ENCODE measurements at regions of chr3 and their contacts with region 1.

Region 1: GRCh38 chr3:141105828-141106628 is 54.9 kb downstream of the SPSB4 start:
- DNase-seq: peak; percentile 61
- H3K4me3 ChIP-seq: no peak overlapping the region
- H3K27ac ChIP-seq: no peak overlapping the region
- H3K4me1 ChIP-seq: no peaks in the 10 kb centered on the region
- H3K27me3 ChIP-seq: peaks cover 3% of the 10 kb centered on the region
- CTCF ChIP-seq: peak; percentile 77 to 79

Region 2: DNA sequence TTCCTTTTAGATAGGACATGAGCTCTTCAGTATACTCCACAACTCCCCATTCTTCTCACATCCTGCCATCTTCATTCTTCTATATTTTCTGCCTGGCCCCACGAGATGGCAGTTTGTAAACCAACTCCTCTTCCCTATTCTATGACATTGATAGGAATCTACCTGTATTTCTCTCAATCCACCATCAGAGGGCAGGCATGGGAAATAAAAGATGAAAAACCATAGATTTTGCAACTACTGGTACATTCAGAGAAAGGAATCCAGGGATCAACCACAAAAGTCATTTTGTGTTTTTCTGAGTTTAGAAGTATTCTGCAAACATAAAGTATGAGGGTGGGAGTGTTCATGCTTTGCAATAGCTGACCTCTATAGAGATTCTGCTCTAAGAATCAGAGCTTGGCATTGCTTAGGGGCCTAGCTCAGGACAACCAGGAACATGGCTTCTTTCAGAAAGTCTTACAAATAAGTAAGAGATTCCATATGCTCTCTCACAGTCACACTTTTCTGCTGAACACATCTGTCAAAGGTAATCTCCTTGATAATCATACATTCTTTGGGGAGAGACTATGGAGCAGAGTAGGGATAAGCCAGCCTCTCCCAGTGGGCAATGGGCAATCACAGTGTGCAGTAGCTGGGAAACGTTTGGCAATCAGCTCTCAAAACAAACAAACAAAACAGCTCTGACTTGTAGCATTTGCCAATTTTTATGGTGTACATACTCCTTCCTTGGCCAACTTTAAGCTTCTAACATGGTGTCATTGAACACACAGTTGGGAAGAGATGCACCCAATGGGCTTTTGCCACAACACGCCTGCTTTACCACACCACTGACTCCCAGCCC is 207.5 kb before region 1 on chr3:
- CTCF ChIA-PET with region 1: no interaction called
- dilution Hi-C with region 1: no loop called
- in situ Hi-C with region 1: loop called in 1 of 2 experiments (anchors 10 kb)
- intact Hi-C with region 1: loop called (anchors 1 kb)
- DNase-seq: peak; percentile 75
- H3K4me3 ChIP-seq: no peak overlapping the region
- H3K27ac ChIP-seq: no peak overlapping the region
- H3K4me1 ChIP-seq: peaks cover 3% of the 10 kb centered on the region
- H3K27me3 ChIP-seq: peaks cover 2% of the 10 kb centered on the region
- CTCF ChIP-seq: peak; percentile 64 to 68

Region 3: GRCh38 chr3:140922634-140923033 is 183.4 kb before region 1 on chr3:
- CTCF ChIA-PET with region 1: no interaction called
- dilution Hi-C with region 1: no loop called
- in situ Hi-C with region 1: no loop called
- intact Hi-C with region 1: loop called (anchors 1 kb)
- DNase-seq: no peak
- H3K4me3 ChIP-seq: no peak overlapping the region
- H3K27ac ChIP-seq: no peak overlapping the region
- H3K4me1 ChIP-seq: no peaks in the 10 kb centered on the region
- H3K27me3 ChIP-seq: peaks cover 2% of the 10 kb centered on the region
- CTCF ChIP-seq: peak; percentile 26 to 56

Region 4: GRCh38 chr3:141000027-141000663 is 105.9 kb before region 1 on chr3:
- CTCF ChIA-PET with region 1: no interaction called
- dilution Hi-C with region 1: no loop called
- in situ Hi-C with region 1: loop called (anchors 5 kb)
- intact Hi-C with region 1: loop called (anchors 1 kb)
- DNase-seq: peak; percentile 51
- H3K4me3 ChIP-seq: no peak overlapping the region
- H3K27ac ChIP-seq: no peak overlapping the region
- H3K4me1 ChIP-seq: no peaks in the 10 kb centered on the region
- H3K27me3 ChIP-seq: no peaks in the 10 kb centered on the region
- CTCF ChIP-seq: peak; percentile 66 to 88

Region 5: DNA sequence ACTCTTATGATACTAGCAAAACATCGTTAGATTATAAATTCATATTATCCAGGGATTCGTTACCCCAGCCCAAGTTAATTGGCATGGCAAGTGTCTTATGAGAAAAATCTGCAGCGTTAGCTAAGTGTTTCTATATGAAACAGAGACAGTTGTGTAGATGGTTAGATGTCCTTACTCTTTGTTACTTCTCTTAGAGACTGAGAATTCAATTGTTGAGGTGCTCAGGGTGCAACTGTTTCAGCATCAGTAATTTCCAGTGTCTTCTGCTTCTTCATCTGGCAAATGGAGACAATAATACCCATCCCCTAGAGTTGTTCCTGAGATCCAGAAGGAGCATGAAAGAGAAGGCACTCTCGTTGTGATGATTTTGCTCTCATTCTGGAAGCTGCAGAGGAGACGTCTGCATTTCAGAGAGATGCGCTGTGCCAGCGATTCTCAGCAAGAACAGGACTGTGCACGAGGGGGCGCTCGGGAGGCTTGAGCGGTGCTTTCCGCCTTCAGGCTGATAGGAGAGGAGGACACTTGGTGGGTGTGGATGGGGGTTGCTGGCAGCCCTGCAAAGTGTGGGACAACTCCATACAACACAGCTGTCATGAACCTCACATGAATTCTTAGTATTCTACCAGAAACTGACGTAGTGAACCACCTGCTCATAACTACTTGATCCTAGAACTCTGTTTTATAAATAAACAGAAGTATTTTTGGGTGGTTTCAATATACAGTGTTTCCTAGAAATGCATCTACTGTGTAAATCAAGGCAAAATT is 94.6 kb before region 1 on chr3:
- CTCF ChIA-PET with region 1: no interaction called
- dilution Hi-C with region 1: no loop called
- in situ Hi-C with region 1: no loop called
- intact Hi-C with region 1: loop called (anchors 1 kb)
- DNase-seq: peak; percentile 31
- H3K4me3 ChIP-seq: no peak overlapping the region
- H3K27ac ChIP-seq: no peak overlapping the region
- H3K4me1 ChIP-seq: no peaks in the 10 kb centered on the region
- H3K27me3 ChIP-seq: peaks cover 2% of the 10 kb centered on the region
- CTCF ChIP-seq: peak; percentile 85 to 92

Region 6: DNA sequence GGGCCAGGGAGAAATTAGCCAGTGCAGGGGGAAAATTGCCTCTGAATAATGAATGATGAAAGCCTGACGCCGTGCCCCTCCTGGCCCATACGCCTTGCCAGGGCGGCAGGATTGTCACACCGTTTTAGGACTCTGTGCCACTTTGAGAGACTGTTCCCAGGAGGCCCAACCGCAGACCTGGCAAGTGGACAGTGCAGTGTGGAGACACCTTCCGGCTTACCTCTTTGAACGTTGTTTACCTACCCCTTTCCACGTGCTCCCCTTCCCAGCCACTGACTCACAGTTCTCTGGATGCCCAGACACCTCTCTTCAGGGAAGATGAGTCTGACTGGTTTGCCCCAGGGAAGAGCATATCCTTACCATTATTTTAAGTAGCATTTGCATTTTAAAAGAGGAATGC is 41.6 kb after region 1 on chr3:
- CTCF ChIA-PET with region 1: no interaction called
- dilution Hi-C with region 1: loop called (anchors 5 kb)
- in situ Hi-C with region 1: no loop called
- intact Hi-C with region 1: no loop called
- DNase-seq: no peak
- H3K4me3 ChIP-seq: no peak overlapping the region
- H3K27ac ChIP-seq: no peak overlapping the region
- H3K4me1 ChIP-seq: no peaks in the 10 kb centered on the region
- H3K27me3 ChIP-seq: peaks cover 3% of the 10 kb centered on the region
- CTCF ChIP-seq: no peak

Region 7: GRCh38 chr3:141192345-141192744 is 86.3 kb after region 1 on chr3:
- CTCF ChIA-PET with region 1: no interaction called
- dilution Hi-C with region 1: no loop called
- in situ Hi-C with region 1: loop called in 1 of 2 experiments (anchors 5 kb)
- intact Hi-C with region 1: loop called (anchors 1 kb)
- DNase-seq: peak; percentile 87
- H3K4me3 ChIP-seq: no peak overlapping the region
- H3K27ac ChIP-seq: no peak overlapping the region
- H3K4me1 ChIP-seq: peaks cover 6% of the 10 kb centered on the region
- H3K27me3 ChIP-seq: peaks cover 7% of the 10 kb centered on the region
- CTCF ChIP-seq: peak; percentile 98 to 99

Region 8: GRCh38 chr3:141710573-141711251 is 604.7 kb after region 1 on chr3:
- CTCF ChIA-PET with region 1: no interaction called
- dilution Hi-C with region 1: no loop called
- in situ Hi-C with region 1: no loop called
- intact Hi-C with region 1: no loop called
- DNase-seq: peak; percentile 57
- H3K4me3 ChIP-seq: no peak overlapping the region
- H3K27ac ChIP-seq: no peak overlapping the region
- H3K4me1 ChIP-seq: peaks cover 9% of the 10 kb centered on the region
- H3K27me3 ChIP-seq: no peaks in the 10 kb centered on the region
- CTCF ChIP-seq: no peak

Measured in mammary epithelial cell (primary cell).